ENCODE measurements at regions of chr3 and their contacts with region 1.

Region 1: DNA sequence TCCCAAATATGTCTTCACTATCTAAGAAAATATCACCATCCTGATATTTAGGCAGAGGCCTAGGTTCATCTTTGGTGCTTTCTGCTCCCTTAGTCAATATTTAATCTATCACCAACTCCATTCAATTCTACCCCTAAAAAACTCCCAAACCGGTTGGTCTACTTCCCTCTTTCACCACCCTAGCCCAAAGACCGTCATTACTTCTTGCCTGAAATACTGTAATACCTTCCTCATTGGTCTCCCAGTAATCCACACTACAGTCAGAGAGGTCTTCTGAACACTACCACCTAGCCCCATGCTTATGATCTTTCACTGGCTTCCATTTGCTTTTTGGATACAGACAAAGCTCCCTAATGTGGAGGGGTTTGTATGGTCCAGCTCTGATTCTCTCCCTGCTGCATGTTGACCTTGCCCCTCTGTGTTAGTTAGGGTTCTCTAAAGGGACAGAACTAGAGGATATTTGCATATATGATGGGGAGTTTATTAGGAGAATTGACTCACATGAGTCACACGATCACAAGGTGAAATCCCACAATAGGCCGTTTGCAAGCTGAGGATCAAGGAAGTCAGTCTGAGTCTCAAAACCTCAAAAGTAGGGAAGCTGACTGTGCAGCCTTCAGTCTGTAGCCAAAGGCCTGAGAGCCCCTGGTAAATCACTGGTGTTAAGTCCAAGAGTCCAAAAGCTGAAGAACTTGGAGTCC is 36.4 kb upstream of the ATP2C1 start:
- DNase-seq: peak in 2 of 14 experiments; percentile 46 to 62
- ATAC-seq: no peak
- H3K4me3 ChIP-seq: no peak overlapping the region
- H3K4me3 Mint-ChIP-seq: no peak overlapping the region
- H3K27ac ChIP-seq: no peak overlapping the region
- H3K27ac Mint-ChIP-seq: no peak overlapping the region
- H3K4me1 ChIP-seq: no peaks in the 10 kb centered on the region
- H3K4me1 Mint-ChIP-seq: no peaks in the 10 kb centered on the region
- H3K27me3 ChIP-seq: no peaks in the 10 kb centered on the region
- H3K27me3 Mint-ChIP-seq: peaks cover 6% of the 10 kb centered on the region
- CTCF ChIP-seq: no peak

Region 2: GRCh38 chr3:130834476-130834875 is 23.0 kb before region 1 on chr3:
- CTCF ChIA-PET with region 1: no interaction called
- POLR2A ChIA-PET with region 1: no interaction called
- intact Hi-C with region 1: loop called in 1 of 2 experiments (anchors 1 kb)
- DNase-seq: no peak
- ATAC-seq: no peak
- H3K4me3 ChIP-seq: no peak overlapping the region
- H3K4me3 Mint-ChIP-seq: no peak overlapping the region
- H3K27ac ChIP-seq: no peak overlapping the region
- H3K27ac Mint-ChIP-seq: no peak overlapping the region
- H3K4me1 ChIP-seq: no peaks in the 10 kb centered on the region
- H3K4me1 Mint-ChIP-seq: no peaks in the 10 kb centered on the region
- H3K27me3 ChIP-seq: peaks cover 0 to 4% of the 10 kb centered on the region in 2 experiments
- H3K27me3 Mint-ChIP-seq: no peaks in the 10 kb centered on the region
- CTCF ChIP-seq: no peak

Region 3: GRCh38 chr3:131454501-131454900 is 597.0 kb after region 1 on chr3:
- CTCF ChIA-PET with region 1: no interaction called
- POLR2A ChIA-PET with region 1: no interaction called
- intact Hi-C with region 1: no loop called
- DNase-seq: no peak
- ATAC-seq: no peak
- H3K4me3 ChIP-seq: no peak overlapping the region
- H3K4me3 Mint-ChIP-seq: no peak overlapping the region
- H3K27ac ChIP-seq: no peak overlapping the region
- H3K27ac Mint-ChIP-seq: no peak overlapping the region
- H3K4me1 ChIP-seq: no peaks in the 10 kb centered on the region
- H3K4me1 Mint-ChIP-seq: no peaks in the 10 kb centered on the region
- H3K27me3 ChIP-seq: no peaks in the 10 kb centered on the region
- H3K27me3 Mint-ChIP-seq: no peaks in the 10 kb centered on the region
- CTCF ChIP-seq: no peak